Right ventricle myocardium inferior (tissue), 1 donor: ENCODE measurements at regions of chr20 and their contacts with region 1.

Region 1: GRCh38 chr20:31951530-31952453 is at the start of gene PDRG1:
- DNase-seq: peak; percentile 99
- ATAC-seq: peak; percentile 98
- total RNA-seq, gene PDRG1: 11.0 TPM

Region 2: GRCh38 chr20:31861346-31862156 is 90.2 kb before region 1 on chr20:
- intact Hi-C with region 1: no loop called
- DNase-seq: no peak
- ATAC-seq: peak; percentile 56

Region 3: DNA sequence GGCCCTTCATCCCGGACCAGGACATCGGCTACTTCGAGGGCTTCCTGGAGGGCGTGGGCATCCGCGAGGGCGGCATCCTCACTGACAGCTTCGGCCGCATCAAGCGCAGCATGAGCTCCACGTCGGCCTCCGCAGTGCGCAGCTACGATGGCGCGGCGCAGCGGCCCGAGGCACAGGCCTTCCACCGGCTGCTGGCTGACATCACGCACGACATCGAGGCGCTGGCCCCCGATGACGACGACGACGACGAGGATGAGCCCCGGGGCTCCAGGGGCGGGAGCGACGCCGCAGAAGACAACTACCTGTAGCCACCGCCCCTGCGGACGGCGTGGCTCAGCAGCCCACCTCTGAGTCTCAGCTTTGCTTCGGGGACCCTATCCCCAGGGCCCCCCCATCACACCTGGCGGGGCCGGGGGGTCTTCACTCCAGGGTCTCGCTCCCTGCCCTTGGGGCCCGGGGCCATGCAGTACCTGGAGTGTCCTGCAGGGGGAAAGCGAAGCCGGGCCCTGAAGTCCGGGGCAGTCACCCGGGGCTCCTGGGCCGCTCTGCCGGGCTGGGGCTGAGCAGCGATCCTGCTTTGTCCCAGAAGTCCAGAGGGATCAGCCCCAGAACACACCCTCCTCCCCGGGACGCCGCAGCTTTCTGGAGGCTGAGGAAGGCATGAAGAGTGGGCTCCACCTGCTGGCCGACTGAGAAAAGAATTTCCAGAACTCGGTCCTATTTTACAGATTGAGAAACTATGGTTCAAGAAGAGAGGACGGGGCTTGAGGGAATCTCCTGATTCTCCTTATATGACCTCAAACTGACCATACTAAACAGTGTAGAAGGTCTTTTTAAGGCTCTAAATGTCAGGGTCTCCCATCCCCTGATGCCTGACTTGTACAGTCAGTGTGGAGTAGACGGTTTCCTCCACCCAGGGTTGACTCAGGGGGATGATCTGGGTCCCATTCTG is 79.5 kb after region 1 on chr20:
- intact Hi-C with region 1: loop called (anchors 5 kb)
- DNase-seq: peak; percentile 83
- ATAC-seq: peak; percentile 82

Region 4: DNA sequence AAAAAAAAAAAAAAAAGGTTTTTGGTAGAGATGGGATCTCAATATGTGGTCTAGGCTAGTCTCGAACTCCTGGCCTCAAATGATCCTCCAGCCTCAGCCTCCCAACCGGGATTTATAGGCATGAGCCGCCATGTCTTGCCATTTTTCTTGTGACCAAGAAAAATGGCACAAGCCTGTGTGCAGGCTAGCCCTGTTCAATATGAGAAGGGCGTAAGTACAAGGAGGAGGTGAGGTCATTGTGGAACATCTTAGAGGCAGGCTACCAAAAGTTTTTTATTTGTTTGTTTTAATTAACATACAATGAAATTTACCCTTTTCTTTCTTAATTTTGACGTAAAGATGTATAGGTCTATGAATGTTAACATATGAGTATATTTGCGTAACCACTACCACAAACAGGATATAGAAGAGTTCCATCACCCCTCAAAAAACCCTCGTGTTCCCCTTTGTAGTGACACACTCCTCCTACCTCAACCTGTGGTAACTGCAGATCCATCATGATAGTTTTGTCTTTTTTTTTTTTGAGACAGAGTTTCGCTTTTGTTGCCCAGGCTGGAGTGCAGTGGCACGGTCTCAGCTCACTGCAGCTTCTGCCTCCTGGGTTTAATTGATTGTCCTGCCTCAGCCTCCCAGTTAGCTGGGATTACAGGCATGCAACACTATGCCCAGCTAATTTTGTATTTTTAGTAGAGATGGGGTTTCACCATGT is 297.4 kb after region 1 on chr20:
- intact Hi-C with region 1: no loop called
- DNase-seq: no peak
- ATAC-seq: no peak